ENCODE measurements at regions of chr1 and their contacts with region 1.

Region 1: DNA sequence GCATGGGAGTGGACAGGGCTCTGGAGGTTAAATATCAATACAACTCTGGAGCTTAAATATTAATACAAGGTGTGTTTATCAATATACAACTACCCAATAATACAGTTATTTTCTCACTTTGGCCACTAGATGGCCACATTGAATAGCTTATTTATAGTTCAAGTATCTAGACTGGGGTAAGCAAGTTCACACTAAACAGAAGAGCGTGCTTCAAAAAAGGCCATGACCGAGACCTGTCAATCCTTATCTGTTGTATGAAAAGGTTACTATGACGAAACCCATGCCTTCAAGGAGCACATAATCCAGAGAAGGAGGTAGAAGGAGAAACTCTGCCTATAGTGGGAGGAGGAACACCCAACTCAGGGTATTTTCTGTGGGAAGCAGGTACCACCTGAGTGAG is 29.1 kb downstream of the CHML start:
- DNase-seq: no peak
- H3K4me3 Mint-ChIP-seq: no peak overlapping the region
- H3K27ac Mint-ChIP-seq: no peak overlapping the region
- H3K4me1 Mint-ChIP-seq: peaks cover 14% of the 10 kb centered on the region
- H3K27me3 Mint-ChIP-seq: no peaks in the 10 kb centered on the region

Region 2: DNA sequence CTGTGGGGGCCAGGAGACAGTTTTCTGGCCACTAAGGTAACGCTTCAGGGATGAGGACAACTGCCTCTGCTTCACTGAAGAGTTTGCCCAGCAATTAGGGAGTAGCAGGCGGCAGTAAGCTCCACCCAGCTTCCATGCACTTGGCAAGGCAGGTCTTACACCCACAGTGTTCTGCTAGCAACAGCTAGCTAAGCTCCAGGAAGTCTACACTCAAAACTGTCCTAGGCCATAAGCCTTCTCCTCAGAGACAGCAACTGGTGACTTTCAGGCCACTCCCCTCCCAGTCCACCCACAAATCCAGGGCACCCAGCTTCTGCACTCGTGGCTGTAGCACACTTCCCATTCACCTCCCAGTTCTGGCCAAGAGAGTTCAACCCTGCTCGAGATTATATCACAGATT is 31.6 kb before region 1 on chr1:
- intact Hi-C with region 1: no loop called
- DNase-seq: no peak
- H3K4me3 Mint-ChIP-seq: no peak overlapping the region
- H3K27ac Mint-ChIP-seq: no peak overlapping the region
- H3K4me1 Mint-ChIP-seq: no peaks in the 10 kb centered on the region
- H3K27me3 Mint-ChIP-seq: peaks cover 3% of the 10 kb centered on the region

Region 3: GRCh38 chr1:241592273-241592958 is 18.6 kb before region 1 on chr1:
- intact Hi-C with region 1: loop called (anchors 2 kb)
- DNase-seq: no peak
- H3K4me3 Mint-ChIP-seq: no peak overlapping the region
- H3K27ac Mint-ChIP-seq: peak overlapping the region; percentile 21
- H3K4me1 Mint-ChIP-seq: peaks cover 12% of the 10 kb centered on the region
- H3K27me3 Mint-ChIP-seq: no peaks in the 10 kb centered on the region

Region 4: DNA sequence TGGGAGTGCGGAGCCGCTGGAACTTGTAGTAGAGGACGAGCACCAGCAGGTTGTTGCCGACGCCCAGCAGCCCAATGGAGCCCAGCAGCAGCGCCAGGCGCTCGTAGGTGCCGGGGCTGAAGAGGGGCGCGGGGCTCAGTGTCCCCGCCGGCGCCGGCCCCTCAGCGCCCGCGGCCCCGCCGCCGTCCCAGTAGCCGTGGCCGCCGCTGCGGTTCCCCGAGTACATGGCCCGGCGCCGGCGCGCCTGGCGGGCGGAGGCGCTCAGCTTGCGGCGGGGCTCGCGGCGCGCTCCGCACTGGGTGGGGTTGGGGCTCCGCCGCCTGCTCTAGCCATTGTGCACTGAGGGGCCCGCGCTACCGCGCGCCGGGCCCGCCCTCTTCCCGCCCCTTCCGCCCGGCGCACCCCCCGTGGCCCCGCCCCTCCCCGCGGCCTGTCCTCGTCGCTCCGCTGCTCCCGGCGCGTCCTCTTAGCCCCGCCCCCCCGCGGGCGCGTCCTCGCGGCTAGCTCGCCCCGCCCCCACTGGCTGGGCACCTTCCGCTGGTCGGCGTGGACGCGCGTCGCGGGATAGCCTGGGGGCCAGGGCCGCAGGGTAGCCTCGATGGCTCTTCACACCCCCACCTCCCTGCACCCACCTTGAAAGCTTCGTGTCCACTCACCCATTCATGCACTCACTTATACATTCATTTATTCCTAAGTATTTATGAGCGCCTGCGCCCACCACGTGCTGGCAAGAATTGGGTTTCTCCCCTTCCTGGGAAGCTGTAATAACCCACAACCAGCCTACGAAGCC is 29.2 kb after region 1 on chr1 and contains the starts of genes CHML and OPN3:
- intact Hi-C with region 1: loop called (anchors 1 kb)
- DNase-seq: peak; percentile 90
- H3K4me3 Mint-ChIP-seq: peak within 1 kb of the TSS; percentile 84
- H3K27ac Mint-ChIP-seq: peak within 1 kb of the TSS; percentile 85
- H3K4me1 Mint-ChIP-seq: peaks cover 54% of the 10 kb centered on the region
- H3K27me3 Mint-ChIP-seq: no peaks in the 10 kb centered on the region
- total RNA-seq, gene CHML: 17.8 and 20.8 TPM in 2 replicates
- total RNA-seq, gene OPN3: 9.5 and 11.1 TPM in 2 replicates

Region 5: DNA sequence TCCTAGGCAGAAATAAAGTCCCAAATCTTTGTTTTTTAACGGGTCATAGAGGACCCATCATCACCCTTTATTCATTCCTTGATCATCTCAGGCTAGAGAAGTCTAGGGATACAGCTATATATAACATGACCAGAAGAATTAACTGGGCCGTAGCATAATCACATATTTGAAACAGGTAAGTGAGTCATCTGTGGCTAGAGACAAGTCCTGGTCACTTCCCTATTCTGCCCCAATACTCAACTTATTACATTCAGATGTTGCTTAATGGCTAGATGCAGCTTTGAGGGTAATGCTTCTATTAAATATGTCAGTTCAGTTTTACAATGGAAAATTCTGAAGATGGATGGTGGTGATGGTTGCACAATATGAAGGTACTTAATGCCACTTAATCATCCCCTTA is 283.9 kb after region 1 on chr1:
- intact Hi-C with region 1: loop called (anchors 1 kb)
- DNase-seq: no peak
- H3K4me3 Mint-ChIP-seq: no peak overlapping the region
- H3K27ac Mint-ChIP-seq: no peak overlapping the region
- H3K4me1 Mint-ChIP-seq: no peaks in the 10 kb centered on the region
- H3K27me3 Mint-ChIP-seq: no peaks in the 10 kb centered on the region

Region 6: GRCh38 chr1:242017584-242018233 is 406.6 kb after region 1 on chr1:
- intact Hi-C with region 1: loop called (anchors 1 kb)
- DNase-seq: no peak
- H3K4me3 Mint-ChIP-seq: no peak overlapping the region
- H3K27ac Mint-ChIP-seq: no peak overlapping the region
- H3K4me1 Mint-ChIP-seq: no peaks in the 10 kb centered on the region
- H3K27me3 Mint-ChIP-seq: peaks cover 1% of the 10 kb centered on the region

Measured in activated T-helper 1 cell treated with anti-CD3 and anti-CD28 coated beads, Interleukin-12 subunit alpha, Interleukin-12 subunit beta, Interleukin-2, Interleukin-4 antibody, amounts not matched to agents 30 ng/mL and 10 ng/mL and 1 ng/mL, durations not matched to agents 14 hours and 24 hours and 36 hours (primary cell).